ENCODE measurements at regions of chr3 and their contacts with region 1.

Region 1: GRCh38 chr3:53729618-53730017 is 116.6 kb downstream of the CHDH start:
- DNase-seq: no peak
- ATAC-seq: peak; percentile 47
- H3K4me3 Mint-ChIP-seq: no peak overlapping the region
- H3K27ac Mint-ChIP-seq: no peak overlapping the region
- H3K4me1 Mint-ChIP-seq: no peaks in the 10 kb centered on the region
- H3K27me3 Mint-ChIP-seq: peaks cover 14% of the 10 kb centered on the region
- CTCF ChIP-seq: no peak

Region 2: DNA sequence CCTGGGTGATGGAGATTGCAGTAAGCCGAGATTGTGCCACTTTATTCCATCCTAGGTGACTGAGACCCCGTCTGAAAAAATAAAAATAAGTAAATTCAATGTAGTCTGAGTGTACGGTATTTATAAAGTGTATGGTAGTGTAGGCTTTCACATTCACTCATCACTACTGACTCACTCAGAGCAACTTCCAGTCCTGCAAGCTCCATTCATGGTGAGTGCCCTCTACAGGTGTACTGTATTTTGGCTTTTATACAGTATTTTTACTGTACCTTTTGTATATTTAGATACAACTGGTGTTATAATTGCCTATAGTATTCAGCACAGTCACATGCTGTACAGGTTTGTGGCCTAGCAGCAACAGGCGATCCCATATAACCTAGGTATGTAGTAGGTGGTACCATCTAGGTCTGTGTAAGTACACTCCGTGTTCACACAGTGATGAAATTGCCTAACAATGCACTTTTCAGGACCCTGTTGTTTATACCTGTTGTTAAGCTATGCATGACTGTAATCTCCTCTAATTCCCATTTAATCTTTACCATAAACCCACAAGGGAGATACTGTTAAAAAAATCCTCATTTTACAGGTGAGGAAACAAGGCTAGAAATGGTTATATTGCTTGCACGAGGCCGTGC is 215.9 kb before region 1 on chr3:
- CTCF ChIA-PET with region 1: no interaction called
- POLR2A ChIA-PET with region 1: no interaction called
- intact Hi-C with region 1: no loop called
- DNase-seq: no peak
- ATAC-seq: no peak
- H3K4me3 Mint-ChIP-seq: no peak overlapping the region
- H3K27ac Mint-ChIP-seq: no peak overlapping the region
- H3K4me1 Mint-ChIP-seq: no peaks in the 10 kb centered on the region
- H3K27me3 Mint-ChIP-seq: peaks cover 20% of the 10 kb centered on the region
- CTCF ChIP-seq: no peak

Region 3: DNA sequence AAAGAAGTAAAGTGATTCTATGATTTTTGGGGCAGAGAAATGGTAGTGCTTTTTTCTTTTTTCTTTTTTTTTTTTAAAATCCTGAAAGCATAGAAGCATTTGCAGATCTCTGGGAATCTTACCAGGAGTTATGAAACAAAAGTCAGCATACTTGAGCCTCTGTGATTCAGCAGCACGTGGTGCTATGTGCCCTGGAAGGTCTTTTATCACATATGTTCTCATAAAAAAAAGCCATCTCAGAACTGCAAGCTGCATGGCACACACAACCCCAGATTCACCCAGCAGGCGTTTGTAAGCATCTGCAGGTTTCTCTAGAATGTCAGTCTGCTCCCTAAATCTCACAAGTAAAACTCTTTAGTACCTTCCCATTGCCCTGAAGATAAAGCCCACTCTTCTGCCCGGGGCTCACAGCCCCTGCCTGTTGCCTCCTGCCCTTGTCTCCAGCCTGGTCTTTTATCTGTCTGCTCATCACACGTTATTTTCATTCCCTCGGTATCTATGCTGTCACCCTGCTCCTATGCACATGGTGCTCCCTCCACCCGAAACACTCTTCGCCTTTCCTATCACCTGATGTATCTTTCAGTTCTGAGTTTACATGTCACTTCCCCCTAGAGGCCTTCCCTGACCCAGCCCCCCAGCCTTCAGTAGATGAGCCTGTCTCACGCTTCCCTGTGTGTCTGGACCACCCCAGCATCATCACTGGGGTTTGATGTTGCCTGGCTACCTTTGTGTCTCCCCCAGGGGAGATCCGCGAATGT is 44.2 kb after region 1 on chr3:
- CTCF ChIA-PET with region 1: no interaction called
- POLR2A ChIA-PET with region 1: no interaction called
- intact Hi-C with region 1: no loop called
- DNase-seq: no peak
- ATAC-seq: peak; percentile 88
- H3K4me3 Mint-ChIP-seq: peak overlapping the region; percentile 36
- H3K27ac Mint-ChIP-seq: peak overlapping the region; percentile 56
- H3K4me1 Mint-ChIP-seq: peaks cover 32% of the 10 kb centered on the region
- H3K27me3 Mint-ChIP-seq: no peaks in the 10 kb centered on the region
- CTCF ChIP-seq: no peak

Region 4: DNA sequence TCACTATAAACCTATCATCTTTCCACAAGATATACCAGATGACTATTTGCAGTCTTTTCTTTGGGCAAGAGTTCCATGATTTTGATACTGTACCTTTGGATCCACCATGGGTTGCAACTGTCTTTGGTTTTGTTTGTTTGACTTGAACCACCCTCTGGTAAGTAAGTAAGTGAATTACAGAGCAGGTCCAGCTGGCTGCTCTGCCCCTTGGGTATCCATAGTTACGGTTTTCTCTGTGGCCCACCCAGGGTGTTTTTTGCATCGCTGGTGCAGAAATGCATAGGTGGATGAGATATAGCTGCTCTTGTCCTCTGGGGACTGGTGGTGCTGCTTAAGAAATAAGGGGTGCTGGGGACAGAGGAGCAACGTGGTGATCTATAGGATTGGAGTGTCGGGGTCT is 82.8 kb after region 1 on chr3:
- CTCF ChIA-PET with region 1: no interaction called
- POLR2A ChIA-PET with region 1: no interaction called
- intact Hi-C with region 1: loop called (anchors 5 kb)
- DNase-seq: no peak
- ATAC-seq: no peak
- H3K4me3 Mint-ChIP-seq: no peak overlapping the region
- H3K27ac Mint-ChIP-seq: no peak overlapping the region
- H3K4me1 Mint-ChIP-seq: no peaks in the 10 kb centered on the region
- H3K27me3 Mint-ChIP-seq: no peaks in the 10 kb centered on the region
- CTCF ChIP-seq: no peak

Region 5: GRCh38 chr3:53863145-53863544 is 133.5 kb after region 1 on chr3:
- CTCF ChIA-PET with region 1: no interaction called
- POLR2A ChIA-PET with region 1: no interaction called
- intact Hi-C with region 1: loop called (anchors 1 kb)
- DNase-seq: no peak
- ATAC-seq: no peak
- H3K4me3 Mint-ChIP-seq: no peak overlapping the region
- H3K27ac Mint-ChIP-seq: no peak overlapping the region
- H3K4me1 Mint-ChIP-seq: peaks cover 29% of the 10 kb centered on the region
- H3K27me3 Mint-ChIP-seq: no peaks in the 10 kb centered on the region
- CTCF ChIP-seq: no peak